Activated CD4-positive, alpha-beta T cell treated with anti-CD3 and anti-CD28 coated beads, Interleukin-2, amount 10 ng/mL, durations not matched to agents 24 days and 14 days (primary cell): ENCODE measurements at regions of chr1 and their contacts with region 1.

Region 1: DNA sequence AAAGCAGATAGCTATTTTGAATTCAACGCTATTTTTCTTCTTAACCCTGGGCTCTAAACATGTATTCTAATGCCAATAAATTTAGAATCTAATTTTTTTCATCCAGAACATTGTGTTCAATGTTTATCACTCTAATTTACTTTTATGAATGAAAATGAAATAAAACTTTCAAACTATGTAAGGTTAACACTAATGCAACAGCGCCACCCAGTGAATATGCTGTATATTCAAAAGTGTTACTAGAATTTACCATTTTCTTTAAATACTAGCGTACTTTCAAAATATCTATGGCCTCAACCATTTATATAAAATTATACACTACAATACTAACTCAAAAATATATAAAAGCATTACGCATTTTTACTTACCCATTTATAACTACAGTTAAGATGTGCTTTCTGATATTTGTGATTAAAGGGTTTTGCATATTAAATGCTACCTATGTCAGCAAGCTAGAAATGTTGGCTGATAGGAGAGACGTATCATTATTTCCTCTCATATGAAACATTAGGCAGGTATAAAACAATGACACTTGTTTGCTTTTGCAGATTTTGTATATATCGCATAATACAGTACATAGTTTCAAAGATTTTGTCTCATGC is 5.9 kb upstream of the NUF2 start:
- DNase-seq: peak; percentile 84
- H3K4me3 Mint-ChIP-seq: no peak overlapping the region
- H3K27ac Mint-ChIP-seq: no peak overlapping the region
- H3K4me1 Mint-ChIP-seq: peaks cover 2% of the 10 kb centered on the region
- H3K27me3 Mint-ChIP-seq: no peaks in the 10 kb centered on the region

Region 2: DNA sequence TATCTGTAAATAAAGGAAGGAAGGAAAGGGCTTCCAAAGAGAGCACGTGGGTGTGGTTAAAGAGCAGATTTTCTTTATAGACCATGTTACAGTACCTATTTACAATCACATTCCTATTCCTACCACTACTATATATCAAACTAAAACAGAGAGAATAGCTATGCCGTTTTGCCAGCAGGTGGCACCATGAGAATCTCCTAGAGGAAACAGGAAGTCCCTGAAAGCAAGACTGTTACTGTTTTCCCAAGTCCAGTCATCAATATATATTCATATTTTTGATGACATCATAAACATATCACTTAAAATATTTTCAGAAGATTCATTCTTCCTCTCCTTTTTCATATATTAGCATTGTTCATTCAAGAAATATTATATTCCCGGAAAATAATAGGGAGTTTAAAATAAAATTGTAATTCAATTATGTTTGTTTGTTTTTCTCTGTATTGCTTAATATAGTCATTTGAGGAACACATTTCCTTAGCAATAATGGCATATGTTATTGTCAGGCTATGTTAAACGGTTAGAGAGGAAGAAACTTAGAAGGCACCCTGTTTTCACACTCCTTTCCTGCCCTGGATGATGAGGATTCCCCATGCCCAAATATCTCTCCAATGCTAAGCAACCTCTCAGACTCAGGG is 461.5 kb before region 1 on chr1:
- intact Hi-C with region 1: loop called (anchors 1 kb)
- DNase-seq: peak; percentile 81
- H3K4me3 Mint-ChIP-seq: no peak overlapping the region
- H3K27ac Mint-ChIP-seq: no peak overlapping the region
- H3K4me1 Mint-ChIP-seq: no peaks in the 10 kb centered on the region
- H3K27me3 Mint-ChIP-seq: peaks cover 11% of the 10 kb centered on the region

Region 3: DNA sequence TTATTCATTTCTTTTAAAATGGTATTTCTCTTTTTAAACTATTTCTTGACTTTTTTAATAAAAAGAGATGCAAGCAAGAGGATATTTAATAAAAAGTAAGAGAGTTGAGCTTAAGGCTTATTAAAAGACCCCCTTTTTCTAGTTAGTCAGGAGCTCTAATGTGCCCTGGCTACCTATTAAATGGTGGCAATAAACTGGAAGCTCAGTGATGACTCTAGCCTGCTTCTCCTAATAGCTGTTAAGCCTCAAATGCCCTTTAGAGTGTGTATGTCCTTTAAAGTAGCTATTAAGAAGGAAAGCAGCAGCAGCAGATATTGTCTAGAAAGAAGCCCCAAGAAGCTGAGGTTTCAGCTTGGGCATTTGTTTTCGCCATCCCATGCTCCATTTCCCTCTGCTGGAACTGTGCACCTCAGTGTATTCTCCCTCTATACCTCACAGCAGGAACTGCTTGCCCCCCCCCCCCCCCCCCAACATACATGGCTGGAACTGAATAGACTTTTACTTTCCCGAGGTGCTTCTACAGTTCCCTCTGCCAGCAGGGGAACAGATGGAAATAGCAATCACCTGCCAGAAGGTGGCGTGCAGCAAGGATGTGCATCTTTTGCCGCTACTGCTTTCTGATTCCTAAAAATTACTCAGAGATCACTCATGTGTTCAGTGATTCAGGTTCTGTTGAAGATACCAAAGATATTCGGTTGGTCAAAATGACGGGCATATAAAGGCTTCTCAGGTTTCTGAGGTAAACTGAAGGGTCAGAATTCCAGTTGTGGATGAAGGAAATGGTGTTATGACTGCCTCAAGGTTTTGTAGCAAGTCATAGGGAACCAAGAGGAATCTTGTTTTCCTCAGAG is 244.2 kb before region 1 on chr1:
- intact Hi-C with region 1: loop called (anchors 1 kb)
- DNase-seq: peak; percentile 83
- H3K4me3 Mint-ChIP-seq: no peak overlapping the region
- H3K27ac Mint-ChIP-seq: no peak overlapping the region
- H3K4me1 Mint-ChIP-seq: no peaks in the 10 kb centered on the region
- H3K27me3 Mint-ChIP-seq: peaks cover 36% of the 10 kb centered on the region